GM13977 (cell line): ENCODE measurements at regions of chr2 and their contacts with region 1.

Region 1: DNA sequence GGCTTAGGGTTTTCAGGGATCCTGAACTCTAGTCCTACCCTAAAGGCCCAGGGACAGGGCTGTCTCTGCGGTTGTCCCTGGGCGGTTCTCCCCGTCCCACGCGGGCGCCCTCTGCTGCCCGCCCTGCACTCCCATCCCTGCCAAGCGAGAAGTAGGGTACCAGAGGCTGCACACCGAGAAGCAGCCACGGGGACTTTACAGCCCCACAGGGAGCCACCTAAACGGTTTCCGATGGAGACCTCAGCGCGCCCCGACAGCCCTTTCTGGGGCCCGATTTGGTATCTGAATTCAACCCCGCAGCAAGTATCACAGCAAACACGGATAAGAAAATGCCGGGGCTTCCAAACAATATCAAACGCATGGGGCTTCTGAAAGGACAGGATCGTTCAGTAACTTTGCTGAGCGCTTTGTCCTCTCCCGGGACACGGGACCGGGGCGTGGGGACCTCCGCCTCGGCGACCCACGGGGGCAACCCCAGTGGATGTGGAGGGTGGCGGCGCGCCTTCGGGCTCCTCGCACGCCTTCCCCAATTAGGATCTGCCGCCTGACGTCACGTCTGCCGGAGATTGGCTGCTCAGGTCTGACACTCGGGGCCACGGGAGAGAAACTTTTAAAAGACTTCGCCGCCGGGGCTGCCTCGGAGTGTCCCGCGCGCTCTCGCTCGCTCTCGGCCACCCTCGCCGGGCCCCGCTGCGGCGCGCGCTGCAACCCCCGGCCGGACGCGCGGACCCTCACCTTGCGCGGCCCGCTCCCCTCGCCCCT is at the start of gene LTBP1:
- DNase-seq: peak; percentile 79
- CTCF ChIP-seq: peak; percentile 91

Region 2: DNA sequence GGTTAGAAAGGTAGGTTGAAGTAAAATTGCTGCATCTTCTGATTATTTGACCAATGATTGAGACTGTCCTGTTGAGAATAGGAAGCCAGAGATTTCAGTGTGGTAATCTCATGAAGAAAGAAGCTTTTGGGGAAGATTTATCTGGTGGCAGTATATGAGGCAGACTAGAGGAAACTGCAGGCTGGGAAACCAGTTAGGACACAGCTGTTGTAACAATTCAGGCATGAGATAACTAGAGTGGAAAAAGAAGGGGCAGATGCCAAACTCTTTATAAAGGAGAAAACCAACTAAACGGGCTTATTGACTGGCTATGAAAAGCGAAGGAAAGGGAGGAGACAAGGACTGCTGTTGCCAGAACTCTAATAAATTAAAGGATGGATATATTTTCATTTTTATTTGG is 163.0 kb before region 1 on chr2:
- in situ Hi-C with region 1: loop called (anchors 10 kb)
- DNase-seq: no peak
- CTCF ChIP-seq: no peak